HEK293 (cell line): ENCODE measurements at regions of chr1 and their contacts with region 1.

Region 1: DNA sequence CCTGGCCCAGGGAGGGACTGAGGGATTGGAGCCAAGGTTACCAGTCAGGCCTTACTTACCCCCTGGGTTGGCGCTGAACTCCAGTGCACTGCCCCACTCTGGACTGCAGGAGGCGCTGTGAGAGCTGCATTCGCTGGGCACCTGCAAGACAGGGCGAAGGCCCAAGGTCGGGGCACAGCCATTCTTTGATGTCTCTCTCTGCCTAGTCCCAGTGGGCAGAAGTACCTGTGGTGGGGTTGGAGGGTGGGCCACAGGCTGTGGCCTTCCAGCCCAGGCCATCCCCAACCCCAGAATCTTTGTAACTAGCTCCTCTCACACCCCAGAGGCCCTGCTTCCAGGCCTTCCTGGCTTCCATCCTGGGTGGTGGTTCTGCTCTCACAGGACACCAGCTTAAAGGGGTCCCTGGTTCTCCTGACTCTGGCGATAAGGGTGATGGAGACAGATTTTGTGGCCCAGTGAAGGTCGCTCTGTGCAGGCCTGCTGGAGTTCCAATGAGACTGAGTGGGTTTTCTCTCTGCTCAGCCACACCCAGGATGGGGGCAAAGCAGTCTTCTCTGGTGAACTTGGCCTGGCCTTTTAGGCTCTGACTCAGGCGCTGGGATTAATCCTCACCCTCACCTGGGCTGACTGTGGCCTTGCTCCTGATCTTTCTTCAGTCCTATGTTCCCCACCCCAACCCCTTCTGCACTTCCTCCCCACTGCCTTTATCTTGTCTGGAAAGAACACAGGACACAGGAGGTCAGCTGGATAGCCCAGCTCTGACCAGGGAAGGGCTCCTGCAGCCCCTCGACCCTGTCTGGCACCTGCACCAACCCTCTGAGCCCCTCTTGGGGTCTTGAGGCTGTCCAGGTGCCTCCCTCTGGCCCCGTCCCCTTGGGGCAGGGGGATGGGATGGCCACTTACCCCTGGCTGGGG is 967 bp downstream of the MYOG start:
- H3K4me3 ChIP-seq: no peak overlapping the region
- H3K27ac ChIP-seq: no peak overlapping the region
- H3K4me1 ChIP-seq: no peaks in the 10 kb centered on the region
- CTCF ChIP-seq: no peak; the same call in 1 of the 2 replicates

Region 2: DNA sequence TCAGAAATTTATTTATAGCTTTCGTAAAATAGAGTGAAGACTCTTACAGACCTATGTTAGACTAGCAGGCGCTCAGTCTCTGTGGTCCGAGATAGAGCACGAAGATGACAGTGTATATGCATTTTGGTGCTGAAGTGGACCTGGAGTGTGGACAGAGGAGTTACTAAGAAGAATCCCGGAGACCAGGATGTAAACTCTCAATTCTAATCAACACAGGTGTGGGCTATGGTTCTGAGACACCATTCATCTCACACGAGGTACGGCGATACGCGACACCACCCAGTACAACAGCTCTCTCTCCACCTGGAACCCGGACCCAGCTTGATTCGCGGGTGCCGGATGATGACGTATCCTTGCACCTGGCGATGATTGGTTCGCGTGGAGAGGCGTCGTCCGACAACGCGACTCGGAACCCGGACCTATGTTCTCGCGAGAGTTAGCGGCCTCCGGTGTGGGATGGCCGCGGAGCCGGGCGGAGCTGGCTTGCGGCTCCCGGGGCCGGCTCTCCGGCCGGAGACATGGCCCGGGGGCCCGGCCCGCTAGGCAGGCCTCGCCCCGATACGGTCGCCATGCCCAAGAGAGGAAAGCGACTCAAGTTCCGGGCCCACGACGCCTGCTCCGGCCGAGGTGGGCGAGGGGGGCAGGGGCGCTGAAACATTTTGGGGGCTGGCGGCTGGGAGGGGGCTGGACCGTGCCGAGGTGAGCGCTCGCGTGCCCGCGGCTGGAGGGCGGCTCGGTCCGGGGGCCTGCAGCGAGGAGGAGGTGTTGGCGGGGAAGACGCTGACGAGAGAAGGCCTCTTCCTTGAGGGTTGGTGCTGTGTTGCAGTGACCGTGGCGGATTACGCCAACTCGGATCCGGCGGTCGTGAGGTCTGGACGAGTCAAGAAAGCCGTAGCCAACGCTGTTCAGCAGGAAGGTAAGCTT is 77.6 kb before region 1 on chr1 and contains the start of gene TMEM183A:
- CTCF ChIA-PET with region 1: no interaction called
- POLR2A ChIA-PET with region 1: no interaction called
- H3K4me3 ChIP-seq: peak within 1 kb of the TSS; percentile 87
- H3K27ac ChIP-seq: peak within 1 kb of the TSS; percentile 78
- H3K4me1 ChIP-seq: peaks cover 6% of the 10 kb centered on the region; the same call in 1 of the 2 replicates
- CTCF ChIP-seq: 0 out of 2 replicates have a peak, but pooled peaks have one; percentile 46

Region 3: GRCh38 chr1:203069030-203069747 is 15.7 kb before region 1 on chr1:
- CTCF ChIA-PET with region 1: interaction called, 20 read pairs
- POLR2A ChIA-PET with region 1: no interaction called
- H3K4me3 ChIP-seq: no peak overlapping the region
- H3K27ac ChIP-seq: no peak overlapping the region
- H3K4me1 ChIP-seq: no peaks in the 10 kb centered on the region
- CTCF ChIP-seq: no peak

Region 4: DNA sequence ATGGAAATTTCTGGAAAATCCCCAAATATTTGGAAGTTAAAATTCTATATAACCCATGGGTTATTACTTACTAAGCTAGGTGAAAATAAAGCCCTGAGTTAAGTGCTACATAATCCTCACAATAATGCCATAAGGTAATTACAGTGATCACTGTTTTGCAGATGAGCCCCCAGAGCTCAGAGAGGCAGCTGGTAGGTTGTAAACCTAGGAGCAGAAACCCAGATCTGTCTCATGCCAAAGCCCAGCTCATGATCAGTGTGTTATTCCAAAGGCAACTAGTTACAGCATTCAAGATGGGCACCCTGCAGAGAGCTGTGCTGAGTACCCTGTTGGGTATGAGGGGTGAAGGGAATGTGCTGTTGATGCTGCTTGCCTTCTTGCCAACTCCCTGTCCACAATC is 11.7 kb after region 1 on chr1:
- CTCF ChIA-PET with region 1: interaction called, 10 read pairs
- POLR2A ChIA-PET with region 1: no interaction called
- H3K4me3 ChIP-seq: no peak overlapping the region
- H3K27ac ChIP-seq: no peak overlapping the region
- H3K4me1 ChIP-seq: no peaks in the 10 kb centered on the region
- CTCF ChIP-seq: no peak

Region 5: DNA sequence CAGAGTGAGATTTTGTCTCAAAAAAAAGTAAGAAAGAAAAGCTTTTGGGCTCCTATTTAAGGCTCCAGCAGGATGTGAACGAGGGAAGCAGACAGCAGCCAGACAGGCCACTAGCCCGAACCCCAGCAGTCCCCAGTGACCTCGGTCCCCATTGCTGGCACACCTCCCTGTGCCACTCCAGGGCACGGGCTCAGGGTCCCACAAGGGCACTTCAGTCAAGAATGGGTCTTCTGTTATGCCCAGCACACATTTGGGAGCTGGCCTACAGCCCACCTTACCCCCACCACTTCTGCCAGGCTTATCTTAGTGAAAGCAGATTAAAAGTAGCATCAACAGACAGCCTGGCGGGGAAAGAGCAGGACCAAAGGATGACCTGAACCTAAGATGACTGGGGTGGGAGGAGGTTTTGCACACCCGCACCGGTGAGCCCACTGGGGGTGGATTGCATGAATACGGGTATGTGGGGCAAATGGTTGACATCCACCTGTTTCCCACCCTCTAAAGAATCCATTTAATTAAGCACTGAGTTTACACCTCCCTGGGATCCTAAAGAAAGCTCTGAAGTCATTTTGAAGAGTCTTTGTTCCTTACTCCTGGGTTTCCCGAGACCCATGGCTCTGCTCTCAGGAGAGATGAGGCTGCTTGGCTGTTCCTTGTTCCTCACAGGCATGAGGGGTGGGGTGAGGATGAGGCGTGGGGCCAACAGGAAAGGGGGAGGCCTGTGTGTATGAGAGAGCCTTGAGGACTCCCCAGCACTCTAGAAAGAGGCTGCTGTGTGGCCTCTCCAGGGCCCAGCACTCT is 96.9 kb after region 1 on chr1:
- CTCF ChIA-PET with region 1: no interaction called
- POLR2A ChIA-PET with region 1: no interaction called
- H3K4me3 ChIP-seq: no peak overlapping the region
- H3K27ac ChIP-seq: no peak overlapping the region
- H3K4me1 ChIP-seq: no peaks in the 10 kb centered on the region; the same call in 1 of the 2 replicates
- CTCF ChIP-seq: no peak